CD4-positive, alpha-beta T cell (primary cell): ENCODE measurements at regions of chr10 and their contacts with region 1.

Region 1: GRCh38 chr10:3800586-3800985 is 15.6 kb upstream of the KLF6 start:
- DNase-seq: peak in 1 of 14 experiments; percentile 67
- ATAC-seq: no peak
- H3K4me3 ChIP-seq: no peak overlapping the region
- H3K4me3 Mint-ChIP-seq: no peak overlapping the region
- H3K27ac ChIP-seq: no peak overlapping the region
- H3K27ac Mint-ChIP-seq: peak overlapping the region; percentile 69
- H3K4me1 ChIP-seq: peaks cover 44% of the 10 kb centered on the region
- H3K4me1 Mint-ChIP-seq: peaks cover 28% of the 10 kb centered on the region
- H3K27me3 ChIP-seq: no peaks in the 10 kb centered on the region
- H3K27me3 Mint-ChIP-seq: no peaks in the 10 kb centered on the region
- CTCF ChIP-seq: no peak

Region 2: GRCh38 chr10:3811291-3811870 is 10.8 kb after region 1 on chr10:
- CTCF ChIA-PET with region 1: interaction called, 4 read pairs
- POLR2A ChIA-PET with region 1: interaction called, 14 read pairs
- intact Hi-C with region 1: no loop called
- DNase-seq: peak in 7 of 14 experiments; percentile 24 to 85 (median 48)
- ATAC-seq: peak; percentile 47
- H3K4me3 ChIP-seq: peak overlapping the region; percentile 35
- H3K4me3 Mint-ChIP-seq: peak overlapping the region; percentile 75
- H3K27ac ChIP-seq: peak overlapping the region; percentile 77 to 93
- H3K27ac Mint-ChIP-seq: no peak overlapping the region
- H3K4me1 ChIP-seq: peaks cover 64% of the 10 kb centered on the region
- H3K4me1 Mint-ChIP-seq: peaks cover 48% of the 10 kb centered on the region
- H3K27me3 ChIP-seq: no peaks in the 10 kb centered on the region
- H3K27me3 Mint-ChIP-seq: no peaks in the 10 kb centered on the region
- CTCF ChIP-seq: no peak